Mammary epithelial cell (primary cell): ENCODE measurements at regions of chr2 and their contacts with region 1.

Region 1: GRCh38 chr2:230877732-230878598 is 13.2 kb downstream of the ITM2C start:
- DNase-seq: no peak
- H3K4me3 ChIP-seq: no peak overlapping the region
- H3K27ac ChIP-seq: no peak overlapping the region
- H3K4me1 ChIP-seq: no peaks in the 10 kb centered on the region
- H3K27me3 ChIP-seq: no peaks in the 10 kb centered on the region
- CTCF ChIP-seq: no peak

Region 2: DNA sequence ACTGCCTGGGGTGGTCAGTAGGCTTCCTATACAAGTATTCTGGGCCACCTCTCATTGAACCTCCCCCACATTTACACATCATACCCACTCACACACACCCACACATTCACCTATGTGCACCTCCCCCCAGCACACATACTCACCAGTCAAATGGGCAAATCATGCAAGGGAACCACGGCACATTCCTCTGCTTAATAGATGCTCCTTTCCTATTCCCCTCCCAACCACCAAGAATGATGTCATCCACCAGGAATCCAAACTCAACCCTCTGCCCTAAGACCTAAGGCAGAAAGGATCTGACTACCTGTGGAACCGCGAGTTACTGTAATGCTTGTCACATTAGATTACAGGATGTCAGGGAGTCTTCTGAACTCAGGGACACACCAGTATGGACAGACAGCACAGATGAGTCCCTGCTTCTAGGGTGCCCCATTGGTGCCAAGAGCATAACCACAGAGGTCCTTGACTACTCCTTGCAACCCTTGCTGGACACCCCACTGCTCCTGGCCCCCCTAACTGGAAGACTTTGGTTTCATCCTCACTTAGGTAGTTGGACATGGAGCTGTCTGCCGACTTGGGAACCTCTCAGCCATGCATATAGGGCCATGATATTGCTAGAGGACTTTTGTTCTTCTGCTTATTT is 186.8 kb before region 1 on chr2:
- CTCF ChIA-PET with region 1: no interaction called
- dilution Hi-C with region 1: no loop called
- in situ Hi-C with region 1: no loop called
- intact Hi-C with region 1: no loop called
- DNase-seq: peak; percentile 98
- H3K4me3 ChIP-seq: no peak overlapping the region
- H3K27ac ChIP-seq: peak overlapping the region; percentile 73
- H3K4me1 ChIP-seq: peaks cover 56% of the 10 kb centered on the region
- H3K27me3 ChIP-seq: no peaks in the 10 kb centered on the region
- CTCF ChIP-seq: no peak

Region 3: GRCh38 chr2:230798769-230799399 is 79.1 kb before region 1 on chr2:
- CTCF ChIA-PET with region 1: no interaction called
- dilution Hi-C with region 1: no loop called
- in situ Hi-C with region 1: no loop called
- intact Hi-C with region 1: no loop called
- DNase-seq: peak; percentile 51
- H3K4me3 ChIP-seq: no peak overlapping the region
- H3K27ac ChIP-seq: no peak overlapping the region
- H3K4me1 ChIP-seq: peaks cover 45% of the 10 kb centered on the region
- H3K27me3 ChIP-seq: no peaks in the 10 kb centered on the region
- CTCF ChIP-seq: peak; percentile 70 to 72

Region 4: DNA sequence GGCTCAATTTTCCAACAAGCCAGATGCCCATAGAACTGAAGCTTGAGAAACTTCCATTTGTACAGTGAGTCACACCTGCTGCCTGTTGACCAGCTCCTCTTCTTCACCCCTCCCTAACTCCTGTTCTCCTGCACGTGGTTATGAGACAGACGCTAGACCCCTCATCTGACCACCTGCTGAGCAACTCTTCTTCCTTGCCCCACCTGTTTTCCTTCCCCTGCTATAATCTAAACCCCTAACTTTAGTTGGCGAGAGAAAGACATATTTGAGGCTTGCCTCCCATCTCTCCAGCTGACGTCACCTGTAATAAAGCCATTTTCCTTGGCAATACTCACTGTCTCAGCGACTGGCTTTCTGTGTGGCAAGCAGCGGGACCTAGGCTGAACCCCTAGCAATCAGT is 35.5 kb before region 1 on chr2:
- CTCF ChIA-PET with region 1: no interaction called
- dilution Hi-C with region 1: loop called (anchors 5 kb)
- in situ Hi-C with region 1: no loop called
- intact Hi-C with region 1: no loop called
- DNase-seq: peak; percentile 26
- H3K4me3 ChIP-seq: no peak overlapping the region
- H3K27ac ChIP-seq: no peak overlapping the region
- H3K4me1 ChIP-seq: no peaks in the 10 kb centered on the region
- H3K27me3 ChIP-seq: no peaks in the 10 kb centered on the region
- CTCF ChIP-seq: no peak

Region 5: GRCh38 chr2:230913406-230914143 is 35.6 kb after region 1 on chr2:
- CTCF ChIA-PET with region 1: no interaction called
- dilution Hi-C with region 1: loop called (anchors 5 kb)
- in situ Hi-C with region 1: no loop called
- intact Hi-C with region 1: no loop called
- DNase-seq: no peak
- H3K4me3 ChIP-seq: no peak overlapping the region
- H3K27ac ChIP-seq: no peak overlapping the region
- H3K4me1 ChIP-seq: peaks cover 8% of the 10 kb centered on the region
- H3K27me3 ChIP-seq: no peaks in the 10 kb centered on the region
- CTCF ChIP-seq: peak; percentile 31 to 34

Region 6: GRCh38 chr2:231056453-231057424 is 178.8 kb after region 1 on chr2 and contains the start of gene PSMD1:
- CTCF ChIA-PET with region 1: no interaction called
- dilution Hi-C with region 1: no loop called
- in situ Hi-C with region 1: no loop called
- intact Hi-C with region 1: no loop called
- DNase-seq: peak; percentile 82
- H3K4me3 ChIP-seq: peak within 1 kb of the TSS; percentile 54 to 92 (median 66)
- H3K27ac ChIP-seq: peak within 1 kb of the TSS; percentile 91
- H3K4me1 ChIP-seq: peaks cover 33% of the 10 kb centered on the region
- H3K27me3 ChIP-seq: no peaks in the 10 kb centered on the region
- CTCF ChIP-seq: peak; percentile 95 to 97
- total RNA-seq, gene PSMD1: 114 to 149 TPM